Activated CD8-positive, alpha-beta memory T cell treated with anti-CD3 and anti-CD28 coated beads, Interleukin-2, amount 10 ng/mL, durations not matched to agents 7 days and 5 days (primary cell): ENCODE measurements at regions of chr12 and their contacts with region 1.

Region 1: GRCh38 chr12:666766-667308 is 3.6 kb upstream of the NINJ2 start:
- DNase-seq: peak; percentile 71
- ATAC-seq: peak; percentile 79
- H3K4me3 Mint-ChIP-seq: peak overlapping the region; percentile 47
- H3K27ac Mint-ChIP-seq: peak overlapping the region; percentile 82
- H3K4me1 Mint-ChIP-seq: peaks cover 57% of the 10 kb centered on the region
- H3K27me3 Mint-ChIP-seq: peaks cover 6% of the 10 kb centered on the region

Region 2: GRCh38 chr12:642633-643474 is 24.0 kb before region 1 on chr12:
- CTCF ChIA-PET with region 1: interaction called, 17 read pairs
- DNase-seq: peak; percentile 86
- ATAC-seq: peak; percentile 85
- H3K4me3 Mint-ChIP-seq: peak overlapping the region; percentile 84
- H3K27ac Mint-ChIP-seq: peak overlapping the region; percentile 89
- H3K4me1 Mint-ChIP-seq: peaks cover 58% of the 10 kb centered on the region
- H3K27me3 Mint-ChIP-seq: no peaks in the 10 kb centered on the region

Region 3: DNA sequence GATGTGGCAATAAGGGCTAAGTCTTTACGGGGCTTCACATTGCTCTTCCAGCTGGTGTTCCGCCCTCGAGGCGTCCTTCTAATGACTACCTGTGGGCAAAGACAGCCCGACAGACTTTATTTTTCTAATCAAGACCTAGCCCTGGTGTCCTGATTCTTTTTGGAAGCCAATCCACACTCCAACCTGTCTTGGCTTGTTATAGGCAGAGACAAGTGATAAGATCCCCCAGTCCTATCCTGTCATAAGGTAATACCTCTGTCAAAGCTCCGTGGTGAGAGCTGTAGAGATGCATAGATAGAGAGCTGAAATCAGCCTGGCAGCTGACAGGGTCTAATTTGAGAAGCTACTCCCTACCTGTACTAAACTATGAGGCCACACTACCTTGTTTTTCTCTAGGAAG is 74.1 kb after region 1 on chr12:
- CTCF ChIA-PET with region 1: no interaction called
- DNase-seq: no peak
- ATAC-seq: no peak
- H3K4me3 Mint-ChIP-seq: no peak overlapping the region
- H3K27ac Mint-ChIP-seq: peak overlapping the region; percentile 8
- H3K4me1 Mint-ChIP-seq: peaks cover 32% of the 10 kb centered on the region
- H3K27me3 Mint-ChIP-seq: no peaks in the 10 kb centered on the region